GM10248 (cell line): ENCODE measurements at regions of chr17 and their contacts with region 1.

Region 1: DNA sequence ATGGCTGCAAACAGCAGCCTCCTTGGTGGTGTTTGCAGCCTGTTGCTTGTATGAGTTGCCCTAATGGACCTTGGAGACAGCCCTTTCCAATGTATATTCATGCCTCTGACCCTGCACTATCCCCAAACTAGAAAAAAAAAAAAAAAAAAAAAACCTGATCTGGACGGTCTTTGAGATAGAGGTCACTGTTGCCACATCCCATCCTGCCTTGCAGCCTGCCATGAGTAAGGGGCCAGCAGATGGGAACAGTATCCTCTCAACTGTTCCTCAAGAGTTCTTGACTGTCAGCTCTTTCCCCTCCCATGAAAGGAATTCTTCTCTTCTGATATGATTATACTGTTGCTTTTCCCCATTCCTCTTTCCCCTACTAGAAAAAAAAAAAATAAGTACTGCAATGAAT is 152.4 kb downstream of the SSH2 start:
- DNase-seq: no peak
- CTCF ChIP-seq: no peak

Region 2: DNA sequence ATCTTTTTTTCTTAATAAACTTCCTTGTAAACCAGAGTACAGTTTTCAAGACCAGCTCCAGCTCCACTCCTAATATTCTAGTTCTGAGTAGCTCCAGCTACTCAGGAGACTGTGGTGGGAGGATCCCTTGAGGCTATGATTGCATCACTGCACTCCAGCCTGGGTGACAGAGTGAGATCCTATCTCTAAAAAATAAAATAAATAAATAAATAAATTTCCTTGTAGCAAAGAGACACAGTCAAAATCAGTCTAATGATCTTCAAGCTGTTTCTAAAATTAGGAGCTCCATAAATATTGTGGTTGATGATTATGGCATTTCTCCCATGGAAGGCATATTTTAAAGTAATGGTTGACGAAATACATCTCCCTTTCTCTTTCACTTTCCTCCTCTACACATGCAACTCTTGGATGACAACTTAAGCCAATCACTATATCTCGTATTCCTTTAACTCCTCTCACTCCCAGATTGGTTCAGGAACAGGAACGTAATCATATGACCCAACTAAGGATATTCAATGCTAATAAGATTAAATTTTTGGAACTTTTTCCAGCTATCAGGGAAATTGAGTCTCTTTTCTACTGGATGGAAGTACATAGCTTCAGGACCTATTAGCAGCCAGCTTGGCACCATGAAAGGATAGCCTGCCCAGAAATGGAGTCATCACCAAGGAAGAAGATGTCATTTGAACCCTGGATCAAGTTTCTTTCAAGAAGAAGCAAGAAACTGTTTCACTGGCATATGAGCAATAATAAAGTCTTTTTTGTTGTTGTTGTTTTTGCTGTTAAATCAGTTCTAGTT is 429.6 kb before region 1 on chr17:
- CTCF ChIA-PET with region 1: no interaction called
- POLR2A ChIA-PET with region 1: no interaction called
- DNase-seq: no peak
- CTCF ChIP-seq: no peak

Region 3: GRCh38 chr17:29640413-29640812 is 137.2 kb before region 1 on chr17:
- CTCF ChIA-PET with region 1: interaction called, 100 read pairs
- POLR2A ChIA-PET with region 1: no interaction called
- DNase-seq: no peak
- CTCF ChIP-seq: no peak

Region 4: GRCh38 chr17:29653995-29654714 is 123.5 kb before region 1 on chr17:
- CTCF ChIA-PET with region 1: interaction called, 10 read pairs
- POLR2A ChIA-PET with region 1: no interaction called
- DNase-seq: no peak
- CTCF ChIP-seq: no peak

Region 5: GRCh38 chr17:29766796-29767327 is 10.8 kb before region 1 on chr17:
- CTCF ChIA-PET with region 1: interaction called, 36 read pairs
- POLR2A ChIA-PET with region 1: no interaction called
- DNase-seq: no peak
- CTCF ChIP-seq: no peak

Region 6: DNA sequence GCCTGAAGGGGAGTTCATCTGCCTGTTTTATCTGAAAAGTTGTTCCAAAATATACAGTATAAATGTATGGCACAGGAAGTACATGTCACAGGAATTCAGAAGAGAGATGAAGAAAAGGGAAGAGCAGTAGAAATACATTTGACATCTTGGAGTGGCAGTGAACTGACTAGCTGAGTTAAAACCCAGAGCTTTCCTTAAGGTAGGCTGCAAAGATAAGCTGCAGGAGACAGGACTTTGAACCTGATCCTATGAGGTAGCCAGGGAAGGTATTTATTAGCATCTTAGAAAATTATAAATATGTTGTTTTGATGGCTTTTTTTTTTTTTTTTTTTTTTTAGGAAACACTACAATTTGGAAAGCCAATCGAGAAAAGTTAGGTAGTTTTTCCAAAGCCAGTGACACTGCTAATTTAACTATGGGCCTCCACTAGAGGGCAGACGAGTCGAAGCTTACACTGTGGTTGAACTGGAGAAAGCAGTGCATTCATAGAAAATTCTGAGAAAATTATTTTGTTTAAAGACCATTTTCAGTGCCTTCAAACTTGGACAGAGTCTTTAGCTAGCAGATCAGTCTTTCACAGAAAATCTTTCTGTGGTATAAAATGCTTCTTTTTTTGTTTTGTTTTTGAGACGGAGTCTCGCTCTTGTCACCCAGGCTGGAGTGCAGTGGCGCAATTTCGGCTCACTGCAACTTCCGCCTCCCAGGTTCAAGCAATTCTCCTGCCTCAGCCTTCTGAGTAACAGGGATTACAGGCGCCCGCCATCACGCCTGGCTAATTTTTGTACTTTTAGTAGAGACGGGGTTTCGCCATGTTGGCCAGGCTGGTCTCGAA is 30.1 kb after region 1 on chr17:
- CTCF ChIA-PET with region 1: interaction called, 24 read pairs
- POLR2A ChIA-PET with region 1: no interaction called
- DNase-seq: peak; percentile 68
- CTCF ChIP-seq: peak; percentile 79